ENCODE measurements at regions of chr4 and their contacts with region 1.

Region 1: DNA sequence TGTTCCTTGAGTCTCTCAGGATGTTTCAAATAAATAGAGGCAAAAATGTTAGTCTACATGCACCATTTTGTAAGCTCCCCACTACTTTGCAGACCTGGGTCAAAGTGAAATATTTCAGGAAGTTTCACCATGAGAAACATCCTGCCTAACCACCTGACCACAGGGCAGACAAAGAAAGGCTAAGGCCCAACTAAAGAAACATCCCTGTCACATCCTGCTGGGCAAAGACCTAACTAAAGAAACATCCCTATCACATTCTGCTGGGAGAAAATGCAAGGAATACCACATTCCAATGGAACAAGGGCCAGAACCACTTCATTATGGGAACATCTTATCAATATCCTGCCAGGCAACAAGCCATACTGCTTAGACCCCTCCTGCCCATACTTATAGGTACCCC is 1303.4 kb downstream of the TECRL start:
- DNase-seq: no peak
- ATAC-seq: no peak
- H3K4me3 ChIP-seq: no peak overlapping the region
- H3K27ac ChIP-seq: no peak overlapping the region
- H3K4me1 ChIP-seq: no peaks in the 10 kb centered on the region
- H3K27me3 ChIP-seq: no peaks in the 10 kb centered on the region
- CTCF ChIP-seq: no peak
- POLR2A ChIP-seq: no peak

Region 2: DNA sequence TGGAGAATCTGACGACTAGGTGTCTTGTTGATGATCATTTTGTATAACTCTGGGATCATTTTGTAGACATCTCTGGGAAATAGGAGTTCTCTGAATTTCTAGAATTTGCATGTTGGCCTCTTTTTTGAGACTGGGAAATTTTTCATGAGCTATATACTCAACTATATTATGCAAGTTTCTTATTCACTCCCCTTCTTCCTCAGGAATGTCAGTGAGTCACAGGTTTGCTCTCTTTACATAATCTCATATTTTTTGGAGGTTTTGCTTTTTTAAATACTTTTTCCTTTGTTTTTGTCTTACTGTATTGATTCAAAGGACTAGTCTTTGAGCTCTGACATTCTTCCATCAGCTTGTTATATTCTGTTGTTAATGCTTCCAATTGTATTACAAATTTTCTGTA is 20.7 kb before region 1 on chr4:
- in situ Hi-C with region 1: no loop called
- intact Hi-C with region 1: loop called (anchors 1 kb)
- DNase-seq: no peak
- ATAC-seq: no peak
- H3K4me3 ChIP-seq: no peak overlapping the region
- H3K27ac ChIP-seq: no peak overlapping the region
- H3K4me1 ChIP-seq: no peaks in the 10 kb centered on the region
- H3K27me3 ChIP-seq: no peaks in the 10 kb centered on the region
- CTCF ChIP-seq: no peak
- POLR2A ChIP-seq: no peak